Stomach (tissue), 19 donors: ENCODE measurements at regions of chr19 and their contacts with region 1.

Region 1: DNA sequence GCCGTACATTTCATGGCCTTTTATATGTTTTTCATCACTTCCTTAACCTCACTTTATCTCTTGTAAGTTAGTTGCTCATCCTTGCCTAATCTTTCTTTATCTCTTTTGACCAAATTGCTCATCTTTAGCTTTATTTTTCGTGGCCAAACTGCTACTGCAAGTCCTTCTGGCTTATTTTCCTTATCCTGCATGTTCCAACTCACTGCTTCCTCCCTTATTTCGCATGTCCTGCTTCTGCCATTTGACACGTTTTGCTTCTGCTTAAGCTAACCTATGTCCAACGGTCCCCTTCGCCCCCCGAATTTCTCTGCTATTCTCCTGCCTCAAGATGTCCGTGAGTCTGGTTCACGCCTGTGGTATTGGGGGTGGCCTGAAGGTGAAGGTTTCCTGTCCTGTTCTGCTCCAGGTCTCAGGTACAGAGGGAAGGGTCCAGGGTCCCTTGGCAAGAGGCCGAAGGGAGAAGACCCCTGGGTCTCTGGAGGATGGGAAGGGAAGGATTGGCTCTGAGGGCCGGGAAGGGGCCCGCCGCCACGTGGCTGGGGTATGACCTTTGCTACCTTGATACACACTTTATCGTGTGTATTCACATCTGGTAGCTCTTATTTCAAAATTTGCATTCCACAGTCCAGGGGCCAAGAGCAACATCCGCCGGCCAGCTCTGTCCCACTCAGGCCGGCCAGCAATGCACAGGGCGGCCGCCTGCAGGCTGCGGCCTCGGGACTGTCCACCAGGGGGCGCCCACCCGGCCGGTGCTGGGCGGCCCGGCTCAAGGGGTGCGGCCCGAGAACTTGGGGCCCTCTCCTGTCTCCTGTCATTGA is 2.9 kb upstream of the C19orf85 start:
- DNase-seq: peak; percentile 75 to 84
- H3K4me3 ChIP-seq: no peak overlapping the region
- H3K27ac ChIP-seq: peak overlapping the region in 1 of 5 donors; percentile 13
- H3K4me1 ChIP-seq: peaks cover 0 to 14% (median 12%) of the 10 kb centered on the region in 4 donors
- H3K27me3 ChIP-seq: no peaks in the 10 kb centered on the region
- CTCF ChIP-seq: peak in 5 of 7 experiments; percentile 89 to 100 (median 98)
- EP300 ChIP-seq: no peak
- POLR2A ChIP-seq: no peak

Region 2: GRCh38 chr19:55503502-55504251 is 36.2 kb after region 1 on chr19:
- intact Hi-C with region 1: loop called (anchors 5 kb)
- DNase-seq: peak; percentile 96 to 97
- H3K4me3 ChIP-seq: peak overlapping the region; percentile 44 to 47 (median 46)
- H3K27ac ChIP-seq: peak overlapping the region; percentile 49 to 88 (median 83)
- H3K4me1 ChIP-seq: peaks cover 0 to 21% (median 10%) of the 10 kb centered on the region in 4 donors
- H3K27me3 ChIP-seq: no peaks in the 10 kb centered on the region
- CTCF ChIP-seq: peak in 6 of 7 experiments; percentile 85 to 99 (median 98)
- EP300 ChIP-seq: no peak
- POLR2A ChIP-seq: no peak

Region 3: DNA sequence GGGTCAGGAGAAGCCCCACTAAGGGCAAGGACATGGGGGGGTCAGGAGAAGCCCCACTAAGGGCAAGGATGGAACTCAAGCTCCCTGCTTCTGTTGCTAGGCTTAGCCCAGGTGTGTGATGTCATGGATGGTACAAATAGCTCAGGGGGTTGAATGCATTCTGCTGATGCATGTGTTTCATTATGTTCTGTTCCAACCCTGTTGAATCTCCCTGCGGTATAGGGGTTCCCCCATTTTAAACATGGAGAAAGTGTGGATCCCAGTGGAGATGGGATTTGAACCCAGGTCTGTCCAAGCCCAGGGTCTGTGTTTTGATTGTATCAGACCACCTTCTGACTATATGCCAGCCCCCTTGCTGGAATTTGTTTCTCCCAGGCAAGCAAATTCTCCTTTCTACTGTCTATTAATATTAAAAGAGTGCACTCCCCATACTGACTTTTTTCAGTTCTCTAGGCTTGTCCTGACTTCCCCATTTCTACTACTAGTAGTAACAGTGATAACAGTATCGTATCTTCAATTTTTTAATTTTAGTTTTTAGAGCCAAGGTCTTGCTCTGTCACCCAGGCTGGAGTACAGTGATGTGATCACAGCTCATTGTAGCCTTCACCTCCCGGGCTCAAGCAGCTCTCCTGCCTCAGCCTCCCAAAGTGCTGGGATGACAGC is 144.7 kb after region 1 on chr19:
- intact Hi-C with region 1: no loop called
- DNase-seq: no peak
- H3K4me3 ChIP-seq: no peak overlapping the region
- H3K27ac ChIP-seq: no peak overlapping the region
- H3K4me1 ChIP-seq: peaks cover 0 to 58% (median 19%) of the 10 kb centered on the region in 4 donors
- H3K27me3 ChIP-seq: no peaks in the 10 kb centered on the region
- CTCF ChIP-seq: no peak
- EP300 ChIP-seq: no peak
- POLR2A ChIP-seq: no peak